HepG2 (cell line): ENCODE measurements at regions of chr5 and their contacts with region 1.

Region 1: GRCh38 chr5:177382423-177383029 is 1.7 kb upstream of the SLC34A1 start:
- DNase-seq: no peak
- ATAC-seq: peak; percentile 10
- H3K4me3 ChIP-seq: no peak overlapping the region
- H3K27ac ChIP-seq: no peak overlapping the region
- H3K4me1 ChIP-seq: peaks cover 72% of the 10 kb centered on the region
- H3K27me3 ChIP-seq: peaks cover 7 to 16% of the 10 kb centered on the region in 2 experiments; a peak in 3 of 5 replicates
- CTCF ChIP-seq: peak; percentile 71
- EP300 ChIP-seq: no peak
- POLR2A ChIP-seq: no peak
- RAD21 ChIP-seq: peak; percentile 60; the same call in 1 of the 2 replicates

Region 2: DNA sequence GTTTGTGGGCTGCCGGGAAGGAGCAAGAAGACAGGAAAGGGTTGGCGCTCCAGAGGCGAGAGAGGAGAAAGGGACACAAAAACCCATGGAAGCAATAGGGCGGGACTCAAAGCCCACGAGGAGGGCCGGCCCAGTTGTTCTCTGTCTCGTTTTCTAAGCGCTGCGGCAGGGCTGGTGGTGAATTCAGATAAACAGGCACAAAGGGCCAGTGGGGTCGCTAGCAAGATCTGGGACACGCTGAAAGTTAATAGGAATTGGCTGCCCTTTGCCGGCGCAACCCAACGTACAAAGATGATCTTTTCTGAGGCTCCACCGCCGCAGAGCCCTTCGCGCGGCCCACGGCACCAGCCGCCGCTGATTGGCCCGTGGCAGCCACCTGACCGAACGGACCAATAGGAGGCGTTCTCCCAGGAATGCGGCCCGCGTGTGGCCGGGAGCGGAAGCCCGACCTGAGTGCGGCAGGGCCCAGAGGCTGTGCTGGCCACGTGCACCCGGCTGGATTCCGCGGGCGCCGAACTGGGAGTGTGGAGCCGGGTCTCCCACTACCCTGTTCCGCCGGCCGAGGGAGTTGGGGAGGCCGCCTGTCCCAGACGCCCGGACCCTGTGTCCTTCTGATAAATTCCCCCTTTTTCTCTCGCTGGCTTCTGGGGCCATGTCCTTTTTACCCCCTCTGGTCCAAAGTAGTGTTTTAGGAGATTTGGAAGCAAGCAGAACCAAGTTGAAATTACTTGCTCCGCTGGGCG is 265.7 kb before region 1 on chr5:
- CTCF ChIA-PET with region 1: no interaction called
- POLR2A ChIA-PET with region 1: no interaction called
- in situ Hi-C with region 1: no loop called
- intact Hi-C with region 1: no loop called
- DNase-seq: no peak
- ATAC-seq: no peak
- H3K4me3 ChIP-seq: no peak overlapping the region
- H3K27ac ChIP-seq: no peak overlapping the region
- H3K4me1 ChIP-seq: peaks cover 34% of the 10 kb centered on the region
- H3K27me3 ChIP-seq: no peaks in the 10 kb centered on the region
- CTCF ChIP-seq: no peak
- EP300 ChIP-seq: no peak
- POLR2A ChIP-seq: no peak
- RAD21 ChIP-seq: no peak

Region 3: GRCh38 chr5:177311723-177312648 is 70.5 kb before region 1 on chr5 and contains the start of gene MXD3:
- CTCF ChIA-PET with region 1: no interaction called
- POLR2A ChIA-PET with region 1: interaction called, 30 read pairs
- in situ Hi-C with region 1: no loop called
- intact Hi-C with region 1: no loop called
- DNase-seq: peak; percentile 94
- ATAC-seq: peak; percentile 71
- H3K4me3 ChIP-seq: peak within 1 kb of the TSS; percentile 63 to 79 (median 75)
- H3K27ac ChIP-seq: peak within 1 kb of the TSS; percentile 95
- H3K4me1 ChIP-seq: peaks cover 51% of the 10 kb centered on the region
- H3K27me3 ChIP-seq: no peaks in the 10 kb centered on the region
- CTCF ChIP-seq: no peak
- EP300 ChIP-seq: peak in 1 of 2 experiments; percentile 34; a peak in 1 of 4 replicates
- POLR2A ChIP-seq: peak in 1 of 2 experiments; percentile 46; a peak in 1 of 4 replicates
- RAD21 ChIP-seq: no peak
- total RNA-seq, gene MXD3: 9.9 and 12.8 TPM in 2 replicates

Region 4: DNA sequence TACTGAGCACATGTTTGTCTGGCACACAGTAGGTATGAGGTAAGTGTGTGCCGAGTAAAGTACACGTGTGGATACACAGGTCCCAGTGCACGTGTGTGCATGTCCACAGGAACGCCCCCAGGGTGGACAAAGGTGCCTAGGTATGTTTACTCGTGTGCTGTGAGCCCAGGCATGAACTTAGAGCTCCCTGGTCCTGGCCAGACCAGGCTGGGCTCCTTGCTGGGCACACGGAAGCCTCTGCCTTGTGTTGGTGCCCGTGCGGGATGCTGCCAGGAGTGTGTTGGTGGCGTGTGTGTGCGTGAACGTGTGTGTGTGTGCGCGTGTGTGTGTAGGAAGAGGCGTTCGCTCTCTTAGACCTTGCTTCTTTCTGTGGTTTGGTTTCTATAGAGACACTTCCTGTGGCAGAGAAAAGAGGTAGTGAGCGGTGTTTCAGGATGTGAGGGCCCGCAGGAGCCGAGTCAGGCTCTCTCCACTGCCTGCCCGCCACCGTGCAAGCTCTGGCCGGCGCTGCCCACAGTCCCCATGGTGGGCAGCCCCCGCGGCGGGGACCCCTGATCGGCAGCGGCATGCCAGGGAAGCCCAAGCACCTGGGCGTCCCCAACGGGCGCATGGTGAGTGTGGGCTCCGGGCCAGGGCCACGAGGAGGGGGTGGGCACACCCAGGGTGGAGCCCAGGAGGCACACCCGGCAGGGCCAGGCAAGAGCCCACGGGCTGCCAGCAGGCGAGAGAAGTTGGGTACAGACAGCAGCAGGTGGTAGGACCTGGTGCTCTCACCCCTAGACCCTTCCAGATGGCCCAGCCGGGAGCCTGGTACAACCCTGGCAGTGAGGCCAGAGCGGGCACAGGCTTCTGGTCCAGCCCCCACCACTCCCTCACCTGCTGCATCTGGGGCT is 24.8 kb before region 1 on chr5 and contains the start of gene RGS14:
- CTCF ChIA-PET with region 1: no interaction called
- POLR2A ChIA-PET with region 1: interaction called, 77 read pairs
- in situ Hi-C with region 1: no loop called
- intact Hi-C with region 1: no loop called
- DNase-seq: no peak
- ATAC-seq: no peak
- H3K4me3 ChIP-seq: peak within 1 kb of the TSS in 1 of 3 experiments; percentile 25; a peak in 1 of 6 replicates
- H3K27ac ChIP-seq: no peak within 1 kb of the TSS
- H3K4me1 ChIP-seq: peaks cover 98% of the 10 kb centered on the region
- H3K27me3 ChIP-seq: peaks cover 0 to 23% of the 10 kb centered on the region in 2 experiments; a peak in 4 of 5 replicates
- CTCF ChIP-seq: no peak
- EP300 ChIP-seq: no peak
- POLR2A ChIP-seq: no peak
- RAD21 ChIP-seq: no peak
- total RNA-seq, gene RGS14: 10.7 and 11.1 TPM in 2 replicates

Region 5: DNA sequence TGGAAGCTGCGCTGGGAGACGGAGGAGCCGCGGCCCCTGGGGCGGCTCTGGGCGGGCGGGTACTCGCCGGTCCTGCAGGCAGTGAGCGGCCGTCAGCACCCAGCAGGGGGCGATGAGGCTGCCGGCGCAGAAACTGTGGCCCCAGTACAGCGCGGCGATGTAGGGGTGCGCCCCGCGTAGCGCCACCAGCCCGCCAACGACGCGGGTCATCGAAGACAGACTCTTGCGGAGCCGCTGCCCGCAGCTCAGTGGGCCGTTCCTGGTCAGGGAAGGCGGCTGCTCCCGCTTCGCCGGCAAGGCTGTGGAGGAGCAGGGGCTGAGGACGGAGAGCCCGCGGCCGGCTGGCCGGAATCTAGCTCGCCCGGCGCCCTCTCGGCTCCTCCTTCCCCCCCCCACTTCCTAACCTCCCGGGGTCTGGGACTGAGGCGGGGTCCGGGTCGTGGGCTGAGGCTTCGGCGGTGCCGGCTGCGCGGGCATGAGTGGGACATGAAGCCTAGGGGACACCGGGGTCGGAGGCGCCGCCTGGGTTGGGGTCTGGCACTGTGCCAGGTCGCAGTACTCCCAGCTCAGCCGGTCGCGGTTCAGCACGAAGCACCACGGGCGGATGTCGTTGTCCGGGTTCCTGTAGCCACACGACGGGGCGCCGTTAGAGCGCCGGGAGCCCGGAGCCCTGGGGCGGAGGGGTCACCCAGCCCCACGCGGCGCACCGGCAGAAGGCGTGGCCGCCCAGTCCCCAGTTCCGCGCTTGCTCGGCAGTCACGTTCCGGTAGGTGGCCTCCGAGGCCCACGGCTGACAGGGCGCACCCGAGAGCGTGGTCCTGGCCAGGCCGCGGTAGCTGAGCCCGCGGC is 21.5 kb after region 1 on chr5:
- CTCF ChIA-PET with region 1: no interaction called
- POLR2A ChIA-PET with region 1: interaction called, 22 read pairs
- in situ Hi-C with region 1: no loop called
- intact Hi-C with region 1: no loop called
- DNase-seq: no peak
- ATAC-seq: peak; percentile 91
- H3K4me3 ChIP-seq: peak overlapping the region; percentile 30 to 70 (median 59); a peak in 5 of 6 replicates
- H3K27ac ChIP-seq: no peak overlapping the region
- H3K4me1 ChIP-seq: peaks cover 20% of the 10 kb centered on the region
- H3K27me3 ChIP-seq: no peaks in the 10 kb centered on the region
- CTCF ChIP-seq: peak; percentile 86
- EP300 ChIP-seq: no peak
- POLR2A ChIP-seq: no peak
- RAD21 ChIP-seq: peak; percentile 80

Region 6: DNA sequence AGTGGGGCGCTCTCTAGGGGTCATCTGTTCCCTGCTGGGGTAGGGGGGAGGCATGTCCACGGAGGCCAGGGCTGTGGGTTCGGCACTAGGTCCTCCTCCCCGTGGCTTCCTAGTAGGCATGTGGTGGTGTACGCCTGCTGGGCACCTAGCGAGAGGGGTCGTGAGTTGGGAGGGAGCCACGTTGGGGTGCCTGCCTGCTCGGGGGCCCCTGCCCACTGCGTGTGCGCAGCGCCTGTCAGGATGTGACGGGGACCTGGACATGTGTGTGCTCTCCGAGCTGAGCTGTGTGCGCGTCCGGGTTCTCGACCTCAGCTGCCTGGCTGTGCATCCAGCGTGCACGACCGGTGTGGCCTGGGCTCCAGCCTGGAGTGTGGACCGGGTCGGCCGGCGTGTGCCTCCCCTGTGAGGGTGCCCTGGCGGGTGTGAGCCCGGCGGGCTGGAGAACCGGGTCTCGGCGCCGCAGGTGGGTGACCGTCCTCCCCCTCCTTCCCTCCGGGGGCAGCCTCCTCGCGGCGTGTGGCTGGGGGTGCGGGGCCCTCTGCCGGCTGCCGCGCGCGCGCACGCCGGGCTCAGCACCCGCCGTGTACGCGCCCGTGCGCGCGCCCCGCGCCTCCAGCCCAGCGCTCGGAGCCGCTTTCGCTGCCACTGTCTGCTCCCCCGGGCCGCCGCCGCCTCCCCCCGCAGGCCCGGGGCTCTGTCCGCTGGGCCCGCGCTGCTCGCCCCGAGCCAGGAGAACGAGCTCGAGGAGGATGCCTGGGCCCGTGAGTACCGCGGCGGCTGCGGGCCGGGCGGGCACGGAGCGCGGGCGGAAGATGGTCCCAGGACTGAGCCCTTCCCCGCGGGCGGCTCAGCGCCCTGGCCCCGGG is 63.9 kb after region 1 on chr5 and contains the start of gene PRR7:
- CTCF ChIA-PET with region 1: no interaction called
- POLR2A ChIA-PET with region 1: interaction called, 18 read pairs
- in situ Hi-C with region 1: no loop called
- intact Hi-C with region 1: no loop called
- DNase-seq: no peak
- ATAC-seq: peak; percentile 27
- H3K4me3 ChIP-seq: peak within 1 kb of the TSS; percentile 55 to 80 (median 61)
- H3K27ac ChIP-seq: peak within 1 kb of the TSS; percentile 74
- H3K4me1 ChIP-seq: peaks cover 49% of the 10 kb centered on the region
- H3K27me3 ChIP-seq: no peaks in the 10 kb centered on the region
- CTCF ChIP-seq: peak; percentile 18
- EP300 ChIP-seq: no peak
- POLR2A ChIP-seq: peak in 1 of 2 experiments; percentile 41; a peak in 1 of 4 replicates
- RAD21 ChIP-seq: peak; percentile 65
- total RNA-seq, gene PRR7: 3.9 and 5.0 TPM in 2 replicates

Region 7: DNA sequence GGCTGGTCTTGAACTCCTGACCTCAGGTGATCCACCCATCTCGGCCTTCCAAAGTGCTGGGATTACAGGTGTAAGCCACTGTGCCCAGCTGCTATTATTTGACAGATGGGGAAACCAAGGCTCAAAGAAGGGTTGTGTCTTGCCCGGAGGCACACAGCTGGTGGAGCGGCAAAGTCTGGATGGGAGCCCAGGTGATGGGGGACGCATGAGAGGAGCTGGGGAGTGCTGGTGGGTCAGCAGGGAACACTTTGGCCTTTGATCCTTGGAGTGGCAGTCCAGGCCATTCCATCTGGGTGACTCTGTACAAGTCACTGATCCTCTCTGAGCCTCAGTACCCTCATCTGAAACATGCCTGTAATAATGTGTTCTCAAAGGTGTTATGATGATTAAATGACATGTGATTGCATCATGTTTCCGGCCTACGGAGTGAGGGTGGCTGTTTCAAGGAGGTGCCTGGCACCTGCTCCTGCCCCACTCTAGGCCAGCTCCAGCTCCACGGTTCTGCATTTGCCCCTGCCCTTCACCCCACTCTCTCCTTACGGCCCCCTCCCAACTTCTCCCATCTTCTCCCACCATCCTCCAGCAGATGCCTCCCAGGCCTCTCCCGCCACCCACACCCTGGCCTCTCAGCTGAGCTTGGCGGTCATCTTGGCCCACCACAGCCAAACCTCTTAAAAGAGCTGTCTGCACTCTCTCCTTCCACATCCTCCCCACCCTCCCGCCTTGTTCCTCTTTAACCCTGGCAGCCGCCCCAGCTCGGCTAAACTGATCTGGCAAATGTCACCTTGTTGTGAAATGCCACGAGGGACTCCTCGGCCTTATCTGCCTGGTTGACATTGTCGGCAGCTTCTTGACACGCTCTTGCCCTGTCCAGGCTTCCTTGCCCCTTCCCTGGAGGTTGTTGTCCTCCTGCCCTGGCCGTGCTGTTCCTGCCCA is 96.5 kb after region 1 on chr5:
- CTCF ChIA-PET with region 1: no interaction called
- POLR2A ChIA-PET with region 1: interaction called, 12 read pairs
- in situ Hi-C with region 1: no loop called
- intact Hi-C with region 1: no loop called
- DNase-seq: no peak
- ATAC-seq: peak; percentile 5; the same call in 1 of the 3 replicates
- H3K4me3 ChIP-seq: no peak overlapping the region
- H3K27ac ChIP-seq: no peak overlapping the region
- H3K4me1 ChIP-seq: peaks cover 54% of the 10 kb centered on the region
- H3K27me3 ChIP-seq: no peaks in the 10 kb centered on the region
- CTCF ChIP-seq: no peak
- EP300 ChIP-seq: no peak
- POLR2A ChIP-seq: no peak
- RAD21 ChIP-seq: no peak

Region 8: GRCh38 chr5:177507165-177507564 is 124.6 kb after region 1 on chr5:
- CTCF ChIA-PET with region 1: no interaction called
- POLR2A ChIA-PET with region 1: no interaction called
- in situ Hi-C with region 1: no loop called
- intact Hi-C with region 1: no loop called
- DNase-seq: peak; percentile 51
- ATAC-seq: peak; percentile 46
- H3K4me3 ChIP-seq: no peak overlapping the region
- H3K27ac ChIP-seq: no peak overlapping the region
- H3K4me1 ChIP-seq: peaks cover 19% of the 10 kb centered on the region
- H3K27me3 ChIP-seq: peaks cover 2 to 11% of the 10 kb centered on the region in 2 experiments; a peak in 2 of 5 replicates
- CTCF ChIP-seq: no peak
- EP300 ChIP-seq: no peak
- POLR2A ChIP-seq: no peak
- RAD21 ChIP-seq: no peak